H1 (cell line): ENCODE measurements at regions of chr11 and their contacts with region 1.

Region 1: DNA sequence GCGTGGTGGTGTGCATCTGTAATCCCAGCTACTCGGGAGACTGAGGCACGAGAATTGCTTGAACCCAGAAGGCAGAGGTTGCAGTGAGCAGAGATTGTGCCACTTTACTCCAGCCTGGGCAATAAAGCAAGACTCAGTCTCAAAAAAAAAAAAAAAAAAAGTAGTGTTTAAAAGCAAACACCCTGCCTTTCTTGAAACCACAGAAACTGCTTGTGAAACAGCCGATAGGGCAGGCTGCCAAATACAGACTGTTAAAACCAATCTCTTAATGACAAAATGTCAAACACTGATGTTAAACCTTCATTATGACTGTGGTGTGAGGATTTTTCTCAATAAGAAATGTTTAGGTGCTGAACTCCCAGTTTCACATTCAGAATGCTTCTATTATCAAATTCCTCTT is 27.3 kb downstream of the MARK2 start:
- DNase-seq: no peak
- H3K4me3 ChIP-seq: no peak overlapping the region
- H3K27ac ChIP-seq: no peak overlapping the region
- H3K4me1 ChIP-seq: peaks cover 0 to 16% (median 4%) of the 10 kb centered on the region in 4 experiments; a peak in 6 of 7 replicates
- H3K27me3 ChIP-seq: no peaks in the 10 kb centered on the region
- CTCF ChIP-seq: no peak
- EP300 ChIP-seq: no peak
- POLR2A ChIP-seq: no peak
- RAD21 ChIP-seq: no peak

Region 2: GRCh38 chr11:63845303-63845702 is 20.9 kb before region 1 on chr11:
- CTCF ChIA-PET with region 1: interaction called, 13 read pairs
- POLR2A ChIA-PET with region 1: interaction called, 3 read pairs
- DNase-seq: no peak
- H3K4me3 ChIP-seq: no peak overlapping the region
- H3K27ac ChIP-seq: no peak overlapping the region
- H3K4me1 ChIP-seq: peaks cover 28 to 43% (median 35%) of the 10 kb centered on the region in 4 experiments
- H3K27me3 ChIP-seq: no peaks in the 10 kb centered on the region
- CTCF ChIP-seq: no peak
- EP300 ChIP-seq: no peak
- POLR2A ChIP-seq: no peak
- RAD21 ChIP-seq: no peak

Region 3: DNA sequence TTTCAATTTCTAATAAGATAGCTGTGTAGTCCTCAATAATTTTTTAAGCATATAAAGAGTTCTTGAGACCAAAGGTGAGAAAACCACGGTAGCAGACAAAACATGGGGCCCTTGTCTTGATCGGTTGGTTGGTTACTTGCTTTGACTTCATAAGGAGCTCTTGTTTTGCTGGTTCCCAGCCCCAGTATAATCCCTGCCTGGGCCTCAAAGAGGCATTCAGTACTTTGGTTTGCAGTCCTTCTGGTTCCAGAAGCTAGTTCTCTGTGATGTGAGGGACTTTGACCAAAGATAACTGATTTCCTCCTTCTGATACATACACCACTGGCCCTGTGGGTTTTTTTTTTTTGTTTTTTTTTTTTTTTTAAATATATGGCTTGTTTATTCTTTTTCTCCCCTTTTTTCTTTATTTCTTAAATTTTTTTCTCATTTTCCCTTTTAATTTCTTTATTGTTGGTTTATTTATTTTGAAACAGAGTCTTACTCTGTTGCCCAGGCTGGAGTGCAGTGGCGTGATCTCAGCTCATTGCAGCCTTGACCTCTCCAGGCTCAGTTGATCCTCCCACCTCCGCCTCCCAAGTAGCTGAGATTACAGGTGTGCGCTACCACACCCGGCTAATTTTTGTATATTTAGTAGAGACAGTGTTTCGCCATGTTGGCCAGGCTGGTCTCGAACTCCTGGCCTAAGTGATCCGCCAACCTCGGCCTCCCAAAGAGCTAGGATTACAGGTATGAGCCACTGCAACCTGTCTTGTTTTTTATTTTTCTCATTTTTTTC is 10.0 kb before region 1 on chr11:
- CTCF ChIA-PET with region 1: interaction called, 13 read pairs
- POLR2A ChIA-PET with region 1: interaction called, 4 read pairs
- DNase-seq: no peak
- H3K4me3 ChIP-seq: no peak overlapping the region
- H3K27ac ChIP-seq: no peak overlapping the region
- H3K4me1 ChIP-seq: peaks cover 0 to 5% (median 0%) of the 10 kb centered on the region in 4 experiments; a peak in 1 of 7 replicates
- H3K27me3 ChIP-seq: no peaks in the 10 kb centered on the region
- CTCF ChIP-seq: no peak
- EP300 ChIP-seq: no peak
- POLR2A ChIP-seq: no peak
- RAD21 ChIP-seq: no peak